ENCODE measurements at regions of chr22 and their contacts with region 1.

Region 1: GRCh38 chr22:37316875-37317371 is 34.6 kb downstream of the CYTH4 start:
- DNase-seq: peak; percentile 72 to 87 (median 76)
- ATAC-seq: peak; percentile 59 to 89 (median 84)
- H3K4me3 ChIP-seq: no peak overlapping the region
- H3K27ac ChIP-seq: no peak overlapping the region
- H3K4me1 ChIP-seq: peaks cover 0 to 34% (median 1%) of the 10 kb centered on the region in 12 donors
- H3K27me3 ChIP-seq: peaks cover 0 to 29% (median 5%) of the 10 kb centered on the region in 9 donors
- CTCF ChIP-seq: peak; percentile 65 to 84 (median 80)
- POLR2A ChIP-seq: no peak

Region 2: DNA sequence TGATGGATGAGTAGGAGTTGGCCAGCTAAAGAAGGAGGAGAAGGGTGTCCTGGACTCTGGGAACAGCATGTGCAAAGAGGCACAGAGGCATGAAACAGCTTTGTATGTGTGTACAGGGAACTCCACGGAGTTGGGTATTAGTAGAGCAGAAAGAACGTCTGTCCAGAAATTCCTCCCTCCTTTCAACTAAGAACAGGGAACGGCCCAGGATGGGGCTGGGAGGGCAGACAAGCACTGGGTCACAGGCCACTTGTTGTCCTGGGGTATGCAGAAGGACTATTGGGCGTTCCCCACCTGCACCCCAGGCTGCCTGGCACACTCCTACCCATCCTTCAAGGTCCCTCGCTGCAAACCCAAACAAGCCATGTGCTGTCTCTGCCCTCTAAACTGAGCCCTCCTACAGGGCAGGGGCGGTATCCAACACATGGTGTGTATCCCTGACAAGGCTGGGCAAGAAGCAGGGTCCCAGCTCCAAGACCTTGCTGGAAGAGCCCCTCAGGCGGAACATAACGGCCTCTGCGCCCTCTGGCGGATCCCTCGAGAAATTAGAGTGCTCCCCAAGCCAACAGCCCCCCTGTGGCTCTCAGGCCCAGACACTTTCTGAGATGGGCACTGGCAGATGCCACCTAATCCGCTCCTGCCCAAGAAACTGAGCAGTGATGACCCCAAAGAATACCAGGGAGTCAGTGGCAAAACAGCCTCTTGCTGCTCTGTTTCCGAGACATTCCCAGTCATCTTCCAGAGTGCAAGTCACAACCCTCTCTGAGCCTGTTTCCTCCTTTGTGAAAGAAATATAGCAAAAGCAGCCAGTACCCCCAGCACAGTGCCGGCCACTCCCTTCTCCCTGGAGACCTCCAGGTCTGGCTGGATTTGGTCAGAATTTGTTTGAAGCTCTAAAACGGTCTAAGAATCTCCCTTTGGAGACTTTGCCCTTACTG is 112.0 kb after region 1 on chr22:
- intact Hi-C with region 1: loop called (anchors 1 to 10 kb)
- DNase-seq: peak in 1 of 5 donors; percentile 66
- ATAC-seq: peak in 2 of 4 donors; percentile 5 to 35
- H3K4me3 ChIP-seq: no peak overlapping the region
- H3K27ac ChIP-seq: no peak overlapping the region
- H3K4me1 ChIP-seq: peaks cover 0 to 28% (median 4%) of the 10 kb centered on the region in 12 donors
- H3K27me3 ChIP-seq: peaks cover 33 to 97% (median 60%) of the 10 kb centered on the region in 9 donors
- CTCF ChIP-seq: peak; percentile 40 to 65 (median 50)
- POLR2A ChIP-seq: no peak

Region 3: GRCh38 chr22:37457093-37457893 is 140.4 kb after region 1 on chr22:
- intact Hi-C with region 1: loop called (anchors 1 to 5 kb)
- DNase-seq: peak; percentile 56 to 79 (median 64)
- ATAC-seq: peak; percentile 51 to 88 (median 82)
- H3K4me3 ChIP-seq: no peak overlapping the region
- H3K27ac ChIP-seq: no peak overlapping the region
- H3K4me1 ChIP-seq: no peaks in the 10 kb centered on the region
- H3K27me3 ChIP-seq: peaks cover 0 to 58% (median 9%) of the 10 kb centered on the region in 9 donors
- CTCF ChIP-seq: peak; percentile 64 to 93 (median 80)
- POLR2A ChIP-seq: no peak

Region 4: GRCh38 chr22:37566903-37567820 is 250.2 kb after region 1 on chr22:
- intact Hi-C with region 1: loop called in 5 of 10 experiments (anchors 2 to 10 kb)
- DNase-seq: peak; percentile 75 to 91 (median 79)
- ATAC-seq: peak; percentile 32 to 67 (median 50)
- H3K4me3 ChIP-seq: no peak overlapping the region
- H3K27ac ChIP-seq: peak overlapping the region in 10 of 12 donors; percentile 43 to 100 (median 64)
- H3K4me1 ChIP-seq: peaks cover 12 to 85% (median 62%) of the 10 kb centered on the region in 12 donors
- H3K27me3 ChIP-seq: peaks cover 0 to 6% (median 0%) of the 10 kb centered on the region in 9 donors
- CTCF ChIP-seq: peak; percentile 89 to 97 (median 92)
- POLR2A ChIP-seq: no peak

Region 5: GRCh38 chr22:37599153-37599552 is 282.2 kb after region 1 on chr22:
- intact Hi-C with region 1: loop called in 3 of 10 experiments (anchors 5 to 10 kb)
- DNase-seq: peak in 1 of 5 donors; percentile 61
- ATAC-seq: peak in 1 of 4 donors; percentile 28
- H3K4me3 ChIP-seq: no peak overlapping the region
- H3K27ac ChIP-seq: no peak overlapping the region
- H3K4me1 ChIP-seq: peaks cover 0 to 5% (median 0%) of the 10 kb centered on the region in 12 donors
- H3K27me3 ChIP-seq: no peaks in the 10 kb centered on the region
- CTCF ChIP-seq: no peak
- POLR2A ChIP-seq: no peak

Measured in heart left ventricle (tissue), 16 donors.